Activated T-helper 1 cell treated with anti-CD3 and anti-CD28 coated beads, Interleukin-12 subunit alpha, Interleukin-12 subunit beta, Interleukin-2, Interleukin-4 antibody, amounts not matched to agents 30 ng/mL and 10 ng/mL and 1 ng/mL, durations not matched to agents 14 hours and 24 hours and 36 hours (primary cell): ENCODE measurements at regions of chr10 and their contacts with region 1.

Region 1: DNA sequence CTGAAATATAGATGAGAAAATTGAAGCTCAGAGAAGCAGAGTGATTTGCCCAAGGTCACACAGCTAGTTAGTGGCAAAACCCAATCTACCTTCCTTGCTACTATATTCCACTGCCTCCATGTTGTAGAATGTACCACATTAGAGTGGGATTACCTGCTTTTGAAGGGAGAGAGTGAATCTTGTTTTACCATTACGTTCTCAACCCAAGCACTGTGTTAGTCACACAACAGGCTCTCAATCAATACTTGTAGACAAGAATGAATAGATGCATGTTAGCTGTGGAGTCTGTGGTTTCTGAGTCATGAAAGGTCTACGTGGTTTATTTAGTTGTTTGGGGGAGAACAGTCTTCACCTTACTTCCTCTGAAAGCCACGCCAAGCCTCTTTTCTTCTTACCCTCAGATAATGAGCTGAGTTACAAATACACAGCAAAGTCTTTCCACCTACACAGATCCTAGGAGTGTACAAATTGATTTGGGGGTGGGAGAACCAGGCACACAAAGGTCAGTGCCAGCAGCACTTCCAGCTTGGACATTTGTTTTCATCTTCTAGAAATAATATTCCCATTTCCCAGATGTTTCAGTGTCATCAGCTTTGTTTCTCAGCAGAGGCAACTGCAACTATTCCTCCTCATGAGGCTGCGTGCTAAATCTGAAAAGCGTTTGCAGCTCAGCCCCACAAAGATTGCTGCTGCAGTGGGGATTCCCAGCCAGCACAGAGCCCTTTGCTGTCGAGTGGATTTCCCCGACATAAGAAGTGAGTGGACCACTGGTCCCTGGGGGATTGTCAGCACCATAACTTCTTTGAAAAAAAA is 71.5 kb upstream of the ADO start:
- DNase-seq: peak; percentile 64
- H3K4me3 Mint-ChIP-seq: peak overlapping the region; percentile 72
- H3K27ac Mint-ChIP-seq: no peak overlapping the region
- H3K4me1 Mint-ChIP-seq: peaks cover 23% of the 10 kb centered on the region
- H3K27me3 Mint-ChIP-seq: no peaks in the 10 kb centered on the region

Region 2: GRCh38 chr10:62183442-62183841 is 549.6 kb before region 1 on chr10:
- intact Hi-C with region 1: loop called (anchors 2 kb)
- DNase-seq: peak; percentile 61
- H3K4me3 Mint-ChIP-seq: peak overlapping the region; percentile 5
- H3K27ac Mint-ChIP-seq: peak overlapping the region; percentile 92
- H3K4me1 Mint-ChIP-seq: peaks cover 88% of the 10 kb centered on the region
- H3K27me3 Mint-ChIP-seq: no peaks in the 10 kb centered on the region

Region 3: GRCh38 chr10:62637249-62638061 is 95.6 kb before region 1 on chr10:
- intact Hi-C with region 1: loop called (anchors 1 kb)
- DNase-seq: peak; percentile 73
- H3K4me3 Mint-ChIP-seq: no peak overlapping the region
- H3K27ac Mint-ChIP-seq: no peak overlapping the region
- H3K4me1 Mint-ChIP-seq: peaks cover 28% of the 10 kb centered on the region
- H3K27me3 Mint-ChIP-seq: no peaks in the 10 kb centered on the region

Region 4: DNA sequence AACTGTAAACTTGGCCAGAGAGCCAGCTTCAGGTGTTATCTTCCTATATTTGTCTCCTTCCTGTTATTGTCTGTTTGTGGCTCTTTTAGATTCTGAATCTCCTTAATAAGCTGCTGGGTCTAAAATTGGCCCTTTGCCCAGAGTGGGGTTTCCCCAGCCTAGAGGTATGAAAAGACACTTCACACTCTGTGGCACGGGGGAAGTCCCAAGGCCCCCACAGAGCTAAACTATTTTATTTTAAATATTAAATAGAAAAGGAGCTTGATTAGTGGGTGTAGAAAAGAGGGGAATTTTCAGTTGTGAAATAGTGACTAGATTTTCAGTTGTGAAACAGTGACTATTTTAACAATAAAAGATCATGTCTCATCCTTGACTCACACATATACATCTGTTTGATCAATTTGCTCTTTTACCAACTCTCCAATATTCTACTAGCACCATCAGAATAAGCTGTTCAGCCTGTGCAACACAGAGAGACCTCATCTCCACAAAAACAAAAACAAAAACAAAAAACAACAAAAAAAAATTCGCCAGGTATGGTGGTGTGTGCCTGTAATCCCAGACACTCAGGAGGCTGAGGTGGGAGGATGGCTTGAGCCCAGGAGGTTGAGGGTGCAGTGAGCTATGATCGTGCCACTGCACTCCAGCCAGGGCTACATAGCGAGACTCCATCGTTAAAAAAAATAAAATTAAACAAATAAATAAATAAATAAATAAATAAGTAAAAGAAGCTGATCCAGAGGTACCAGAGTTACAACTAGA is 46.6 kb after region 1 on chr10:
- intact Hi-C with region 1: loop called (anchors 1 kb)
- DNase-seq: peak; percentile 48
- H3K4me3 Mint-ChIP-seq: peak overlapping the region; percentile 27
- H3K27ac Mint-ChIP-seq: peak overlapping the region; percentile 76
- H3K4me1 Mint-ChIP-seq: peaks cover 45% of the 10 kb centered on the region
- H3K27me3 Mint-ChIP-seq: peaks cover 19% of the 10 kb centered on the region

Region 5: GRCh38 chr10:62992145-62992721 is 259.2 kb after region 1 on chr10:
- intact Hi-C with region 1: loop called (anchors 2 kb)
- DNase-seq: no peak
- H3K4me3 Mint-ChIP-seq: peak overlapping the region; percentile 58
- H3K27ac Mint-ChIP-seq: peak overlapping the region; percentile 94
- H3K4me1 Mint-ChIP-seq: peaks cover 52% of the 10 kb centered on the region
- H3K27me3 Mint-ChIP-seq: peaks cover 4% of the 10 kb centered on the region

Region 6: GRCh38 chr10:63707254-63707910 is 974.3 kb after region 1 on chr10:
- intact Hi-C with region 1: loop called (anchors 2 kb)
- DNase-seq: peak; percentile 19
- H3K4me3 Mint-ChIP-seq: peak overlapping the region; percentile 3
- H3K27ac Mint-ChIP-seq: peak overlapping the region; percentile 61
- H3K4me1 Mint-ChIP-seq: peaks cover 22% of the 10 kb centered on the region
- H3K27me3 Mint-ChIP-seq: no peaks in the 10 kb centered on the region